Activated naive CD4-positive, alpha-beta T cell treated with anti-CD3 and anti-CD28 coated beads, Interleukin-2, amount 10 ng/mL, durations not matched to agents 7 days and 5 days (primary cell): ENCODE measurements at regions of chr10 and their contacts with region 1.

Region 1: GRCh38 chr10:102352066-102352715 is 43.3 kb upstream of the NFKB2 start:
- DNase-seq: peak; percentile 84
- H3K4me3 Mint-ChIP-seq: no peak overlapping the region
- H3K27ac Mint-ChIP-seq: no peak overlapping the region
- H3K4me1 Mint-ChIP-seq: no peaks in the 10 kb centered on the region
- H3K27me3 Mint-ChIP-seq: no peaks in the 10 kb centered on the region

Region 2: GRCh38 chr10:102167861-102168260 is 184.3 kb before region 1 on chr10:
- CTCF ChIA-PET with region 1: interaction called, 32 read pairs
- DNase-seq: no peak
- H3K4me3 Mint-ChIP-seq: no peak overlapping the region
- H3K27ac Mint-ChIP-seq: no peak overlapping the region
- H3K4me1 Mint-ChIP-seq: peaks cover 26% of the 10 kb centered on the region
- H3K27me3 Mint-ChIP-seq: peaks cover 4% of the 10 kb centered on the region

Region 3: GRCh38 chr10:102245101-102245931 is 106.9 kb before region 1 on chr10 and contains the start of gene GBF1:
- CTCF ChIA-PET with region 1: interaction called, 693 read pairs
- DNase-seq: peak; percentile 94
- H3K4me3 Mint-ChIP-seq: peak within 1 kb of the TSS; percentile 99
- H3K27ac Mint-ChIP-seq: peak within 1 kb of the TSS; percentile 92
- H3K4me1 Mint-ChIP-seq: peaks cover 55% of the 10 kb centered on the region
- H3K27me3 Mint-ChIP-seq: peaks cover 27% of the 10 kb centered on the region

Region 4: GRCh38 chr10:102334101-102334500 is 18.1 kb before region 1 on chr10:
- CTCF ChIA-PET with region 1: interaction called, 10 read pairs
- DNase-seq: no peak
- H3K4me3 Mint-ChIP-seq: no peak overlapping the region
- H3K27ac Mint-ChIP-seq: no peak overlapping the region
- H3K4me1 Mint-ChIP-seq: no peaks in the 10 kb centered on the region
- H3K27me3 Mint-ChIP-seq: no peaks in the 10 kb centered on the region

Region 5: GRCh38 chr10:102368072-102368471 is 15.9 kb after region 1 on chr10:
- CTCF ChIA-PET with region 1: interaction called, 25 read pairs
- DNase-seq: no peak
- H3K4me3 Mint-ChIP-seq: no peak overlapping the region
- H3K27ac Mint-ChIP-seq: no peak overlapping the region
- H3K4me1 Mint-ChIP-seq: no peaks in the 10 kb centered on the region
- H3K27me3 Mint-ChIP-seq: no peaks in the 10 kb centered on the region